PC-9 (cell line): ENCODE measurements at regions of chr1 and their contacts with region 1.

Region 1: DNA sequence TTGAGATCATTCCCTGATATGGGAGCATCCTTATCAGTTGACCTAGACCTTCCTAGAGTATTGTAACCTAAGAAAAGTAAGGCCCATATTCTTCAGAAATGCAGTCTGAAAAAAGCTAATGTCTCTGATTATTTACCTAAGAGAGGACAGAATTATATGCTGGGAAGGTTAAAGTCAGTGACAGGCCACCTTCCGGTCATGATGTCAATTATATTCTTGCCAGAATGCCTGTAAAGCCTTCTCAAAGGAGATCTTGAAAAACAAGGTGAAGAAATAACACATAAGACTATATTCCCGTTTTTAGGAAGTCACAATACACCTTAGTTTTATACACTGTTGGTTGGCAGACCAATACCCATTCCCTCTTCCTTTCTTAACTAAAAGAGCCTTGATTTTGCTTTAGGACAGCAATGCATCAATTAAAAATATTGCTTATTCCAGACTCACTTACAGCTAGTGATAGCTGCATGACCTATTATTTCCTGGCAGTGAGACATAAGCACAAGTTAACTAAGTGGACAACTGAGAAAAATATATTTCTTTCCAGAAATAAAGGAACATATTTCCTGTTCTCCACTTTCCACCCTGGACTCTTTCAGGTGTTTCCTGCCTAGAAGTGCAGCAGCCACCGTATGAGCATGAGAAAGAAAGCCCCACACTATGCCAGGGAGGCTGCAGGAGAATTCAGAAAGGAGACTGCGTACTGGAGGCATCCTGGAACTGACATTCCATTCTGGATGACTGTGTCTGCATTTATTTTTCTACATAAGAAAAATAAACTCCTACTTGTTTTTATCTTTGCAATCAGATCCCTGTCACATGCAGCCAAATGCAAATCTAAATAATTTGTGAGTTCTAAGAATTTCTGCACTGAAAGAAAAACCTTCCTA is 332.9 kb upstream of the PTBP2 start:
- DNase-seq: peak in 1 of 2 experiments; percentile 35
- H3K4me3 ChIP-seq: no peak overlapping the region
- H3K27ac ChIP-seq: no peak overlapping the region
- H3K4me1 ChIP-seq: no peaks in the 10 kb centered on the region
- H3K27me3 ChIP-seq: no peaks in the 10 kb centered on the region
- CTCF ChIP-seq: no peak

Region 2: DNA sequence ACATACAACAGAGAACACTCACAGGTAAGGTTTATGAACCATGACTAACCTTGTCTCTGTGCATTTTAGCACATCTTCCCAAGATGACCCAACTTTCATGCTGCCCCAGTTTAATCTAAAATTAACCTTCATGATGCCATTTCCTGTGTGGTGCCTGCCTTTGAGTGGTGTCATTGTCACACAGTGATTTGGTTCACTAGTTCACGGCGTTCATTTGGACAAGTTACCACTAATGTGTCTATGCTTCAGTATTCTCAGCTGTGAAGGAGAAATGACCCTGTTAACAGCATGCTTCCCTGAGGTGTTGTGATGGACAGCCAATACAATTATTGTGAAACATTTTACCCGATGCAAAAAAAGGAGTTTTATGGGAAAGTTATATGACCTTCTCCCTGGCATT is 461.6 kb before region 1 on chr1:
- CTCF ChIA-PET with region 1: no interaction called
- POLR2A ChIA-PET with region 1: no interaction called
- intact Hi-C with region 1: no loop called
- DNase-seq: peak in 1 of 2 experiments; percentile 8
- H3K4me3 ChIP-seq: no peak overlapping the region
- H3K27ac ChIP-seq: no peak overlapping the region
- H3K4me1 ChIP-seq: no peaks in the 10 kb centered on the region
- H3K27me3 ChIP-seq: no peaks in the 10 kb centered on the region
- CTCF ChIP-seq: no peak

Region 3: GRCh38 chr1:96362623-96363022 is 26.0 kb before region 1 on chr1:
- CTCF ChIA-PET with region 1: no interaction called
- POLR2A ChIA-PET with region 1: no interaction called
- intact Hi-C with region 1: loop called (anchors 1 kb)
- DNase-seq: peak; percentile 53 to 87
- H3K4me3 ChIP-seq: no peak overlapping the region
- H3K27ac ChIP-seq: peak overlapping the region; percentile 79
- H3K4me1 ChIP-seq: peaks cover 26% of the 10 kb centered on the region
- H3K27me3 ChIP-seq: no peaks in the 10 kb centered on the region
- CTCF ChIP-seq: no peak

Region 4: GRCh38 chr1:97192872-97193572 is 804.4 kb after region 1 on chr1:
- CTCF ChIA-PET with region 1: no interaction called
- POLR2A ChIA-PET with region 1: no interaction called
- intact Hi-C with region 1: no loop called
- DNase-seq: peak; percentile 68 to 96
- H3K4me3 ChIP-seq: no peak overlapping the region
- H3K27ac ChIP-seq: peak overlapping the region; percentile 60
- H3K4me1 ChIP-seq: peaks cover 16% of the 10 kb centered on the region
- H3K27me3 ChIP-seq: no peaks in the 10 kb centered on the region
- CTCF ChIP-seq: no peak; the same call in 1 of the 2 replicates

Region 5: GRCh38 chr1:97331165-97331564 is 942.5 kb after region 1 on chr1:
- CTCF ChIA-PET with region 1: no interaction called
- POLR2A ChIA-PET with region 1: no interaction called
- intact Hi-C with region 1: no loop called
- DNase-seq: no peak
- H3K4me3 ChIP-seq: no peak overlapping the region
- H3K27ac ChIP-seq: no peak overlapping the region
- H3K4me1 ChIP-seq: no peaks in the 10 kb centered on the region
- H3K27me3 ChIP-seq: no peaks in the 10 kb centered on the region
- CTCF ChIP-seq: no peak